Transverse colon (tissue), 4 donors: ENCODE measurements at regions of chr11 and their contacts with region 1.

Region 1: DNA sequence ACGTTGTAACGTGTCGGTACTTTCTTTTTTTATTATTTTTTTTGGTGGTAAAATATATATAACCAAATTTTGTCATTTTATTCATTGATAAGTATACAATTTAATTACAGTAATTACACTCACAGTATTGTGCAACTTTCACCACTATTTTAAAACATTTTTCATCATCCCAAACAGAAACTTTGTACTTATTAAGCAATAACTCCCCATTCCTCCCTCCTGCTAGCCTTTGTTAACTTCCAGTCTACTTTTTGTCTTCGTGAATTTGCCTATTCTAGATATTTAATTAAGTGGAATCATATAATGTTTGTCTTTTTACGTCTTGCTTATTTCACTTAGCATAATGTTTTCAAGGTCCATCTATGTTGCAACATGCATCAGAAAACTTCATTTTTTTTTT is 58.5 kb downstream of the STIM1 start:
- DNase-seq: no peak
- H3K4me3 ChIP-seq: no peak overlapping the region
- H3K27ac ChIP-seq: no peak overlapping the region
- H3K4me1 ChIP-seq: peaks cover 0 to 40% (median 11%) of the 10 kb centered on the region in 4 donors
- H3K27me3 ChIP-seq: no peaks in the 10 kb centered on the region
- CTCF ChIP-seq: no peak
- EP300 ChIP-seq: no peak
- POLR2A ChIP-seq: no peak

Region 2: GRCh38 chr11:3865388-3866193 is 48.3 kb before region 1 on chr11:
- in situ Hi-C with region 1: no loop called
- intact Hi-C with region 1: loop called (anchors 1 kb)
- DNase-seq: no peak
- H3K4me3 ChIP-seq: no peak overlapping the region
- H3K27ac ChIP-seq: peak overlapping the region; percentile 39 to 56 (median 46)
- H3K4me1 ChIP-seq: peaks cover 28 to 62% (median 40%) of the 10 kb centered on the region in 4 donors
- H3K27me3 ChIP-seq: no peaks in the 10 kb centered on the region
- CTCF ChIP-seq: no peak
- EP300 ChIP-seq: no peak
- POLR2A ChIP-seq: no peak

Region 3: DNA sequence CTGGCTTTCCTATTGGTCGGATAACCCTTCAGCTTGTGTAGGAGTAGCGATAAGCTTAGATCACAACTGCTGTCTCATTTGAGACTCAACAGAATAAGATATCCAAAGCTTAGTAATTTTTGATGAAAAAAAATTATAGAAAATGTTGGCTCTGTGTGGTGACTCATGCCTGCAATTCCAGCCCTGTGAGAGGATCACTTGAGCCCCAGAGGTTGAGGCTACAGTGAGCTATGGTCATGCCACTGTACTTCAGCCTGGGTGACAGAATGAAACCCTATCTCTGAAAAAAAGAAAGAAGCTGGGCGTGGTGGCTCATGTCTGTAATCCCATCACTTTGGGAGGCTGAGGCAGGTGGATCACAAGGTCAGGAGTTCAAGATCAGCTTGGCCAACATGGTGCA is 125.1 kb after region 1 on chr11:
- in situ Hi-C with region 1: no loop called
- intact Hi-C with region 1: no loop called
- DNase-seq: no peak
- H3K4me3 ChIP-seq: no peak overlapping the region
- H3K27ac ChIP-seq: no peak overlapping the region
- H3K4me1 ChIP-seq: peaks cover 0 to 2% (median 0%) of the 10 kb centered on the region in 4 donors
- H3K27me3 ChIP-seq: no peaks in the 10 kb centered on the region
- CTCF ChIP-seq: no peak
- EP300 ChIP-seq: no peak
- POLR2A ChIP-seq: no peak